ENCODE measurements at regions of chr2 and their contacts with region 1.

Region 1: GRCh38 chr2:38685116-38685735 is 19.3 kb downstream of the GALM start:
- DNase-seq: no peak
- H3K4me3 ChIP-seq: no peak overlapping the region
- H3K4me3 Mint-ChIP-seq: peak overlapping the region in 3 of 8 donors; percentile 24 to 62 (median 53)
- H3K27ac ChIP-seq: no peak overlapping the region
- H3K27ac Mint-ChIP-seq: peak overlapping the region in 6 of 7 donors; percentile 10 to 98 (median 83)
- H3K4me1 ChIP-seq: peaks cover 61% of the 10 kb centered on the region
- H3K4me1 Mint-ChIP-seq: peaks cover 38 to 76% (median 54%) of the 10 kb centered on the region in 4 donors
- H3K27me3 ChIP-seq: no peaks in the 10 kb centered on the region
- H3K27me3 Mint-ChIP-seq: no peaks in the 10 kb centered on the region

Region 2: DNA sequence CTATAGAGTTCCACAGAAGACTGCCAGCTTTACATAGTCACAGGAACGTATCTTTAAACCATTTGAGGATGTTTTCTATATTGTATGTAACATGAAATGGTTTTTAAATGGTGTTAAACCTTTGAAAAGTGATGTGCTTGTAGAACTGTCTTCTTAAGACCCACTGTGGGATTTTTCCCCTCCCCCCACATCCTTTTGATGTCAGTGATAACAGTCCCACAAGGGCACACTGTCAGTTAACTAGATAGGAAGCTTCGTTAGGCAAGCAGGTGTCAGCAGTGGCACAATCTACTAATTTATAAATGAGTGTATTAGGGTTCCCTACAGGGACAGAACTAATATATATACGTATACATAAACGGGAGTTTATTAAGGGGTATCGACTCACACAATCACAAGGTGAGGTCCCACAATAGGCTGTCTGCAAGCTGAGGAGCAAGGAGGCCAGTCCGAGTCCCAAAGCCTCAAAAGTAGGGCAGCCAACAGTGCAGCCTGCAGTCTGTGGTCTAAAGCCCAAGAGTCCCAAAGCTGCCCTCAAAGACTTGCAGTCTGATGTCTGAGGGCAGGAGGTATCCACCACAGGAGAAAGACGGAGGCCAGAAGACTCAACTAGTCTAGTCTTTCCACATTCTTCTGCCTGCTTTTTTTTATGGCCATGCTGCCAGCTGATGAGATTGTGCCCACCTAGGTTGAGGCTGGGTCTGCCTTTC is 58.7 kb before region 1 on chr2:
- CTCF ChIA-PET with region 1: interaction called, 14 read pairs
- POLR2A ChIA-PET with region 1: interaction called, 13 read pairs
- intact Hi-C with region 1: no loop called
- DNase-seq: peak; percentile 56 to 71 (median 64)
- H3K4me3 ChIP-seq: no peak overlapping the region
- H3K4me3 Mint-ChIP-seq: peak overlapping the region in 7 of 8 donors; percentile 22 to 70 (median 57)
- H3K27ac ChIP-seq: peak overlapping the region; percentile 7
- H3K27ac Mint-ChIP-seq: peak overlapping the region; percentile 43 to 89 (median 82)
- H3K4me1 ChIP-seq: peaks cover 21% of the 10 kb centered on the region
- H3K4me1 Mint-ChIP-seq: peaks cover 20 to 29% (median 26%) of the 10 kb centered on the region in 4 donors
- H3K27me3 ChIP-seq: no peaks in the 10 kb centered on the region
- H3K27me3 Mint-ChIP-seq: no peaks in the 10 kb centered on the region

Region 3: GRCh38 chr2:38653715-38654527 is 31.3 kb before region 1 on chr2:
- CTCF ChIA-PET with region 1: interaction called, 11 read pairs
- POLR2A ChIA-PET with region 1: interaction called, 21 read pairs
- intact Hi-C with region 1: no loop called
- DNase-seq: peak; percentile 66 to 82 (median 70)
- H3K4me3 ChIP-seq: peak overlapping the region in 1 of 2 donors; percentile 18
- H3K4me3 Mint-ChIP-seq: peak overlapping the region in 7 of 8 donors; percentile 61 to 87 (median 80)
- H3K27ac ChIP-seq: peak overlapping the region; percentile 51
- H3K27ac Mint-ChIP-seq: peak overlapping the region; percentile 87 to 97 (median 97)
- H3K4me1 ChIP-seq: peaks cover 56% of the 10 kb centered on the region
- H3K4me1 Mint-ChIP-seq: peaks cover 32 to 71% (median 50%) of the 10 kb centered on the region in 4 donors
- H3K27me3 ChIP-seq: no peaks in the 10 kb centered on the region
- H3K27me3 Mint-ChIP-seq: no peaks in the 10 kb centered on the region

Region 4: DNA sequence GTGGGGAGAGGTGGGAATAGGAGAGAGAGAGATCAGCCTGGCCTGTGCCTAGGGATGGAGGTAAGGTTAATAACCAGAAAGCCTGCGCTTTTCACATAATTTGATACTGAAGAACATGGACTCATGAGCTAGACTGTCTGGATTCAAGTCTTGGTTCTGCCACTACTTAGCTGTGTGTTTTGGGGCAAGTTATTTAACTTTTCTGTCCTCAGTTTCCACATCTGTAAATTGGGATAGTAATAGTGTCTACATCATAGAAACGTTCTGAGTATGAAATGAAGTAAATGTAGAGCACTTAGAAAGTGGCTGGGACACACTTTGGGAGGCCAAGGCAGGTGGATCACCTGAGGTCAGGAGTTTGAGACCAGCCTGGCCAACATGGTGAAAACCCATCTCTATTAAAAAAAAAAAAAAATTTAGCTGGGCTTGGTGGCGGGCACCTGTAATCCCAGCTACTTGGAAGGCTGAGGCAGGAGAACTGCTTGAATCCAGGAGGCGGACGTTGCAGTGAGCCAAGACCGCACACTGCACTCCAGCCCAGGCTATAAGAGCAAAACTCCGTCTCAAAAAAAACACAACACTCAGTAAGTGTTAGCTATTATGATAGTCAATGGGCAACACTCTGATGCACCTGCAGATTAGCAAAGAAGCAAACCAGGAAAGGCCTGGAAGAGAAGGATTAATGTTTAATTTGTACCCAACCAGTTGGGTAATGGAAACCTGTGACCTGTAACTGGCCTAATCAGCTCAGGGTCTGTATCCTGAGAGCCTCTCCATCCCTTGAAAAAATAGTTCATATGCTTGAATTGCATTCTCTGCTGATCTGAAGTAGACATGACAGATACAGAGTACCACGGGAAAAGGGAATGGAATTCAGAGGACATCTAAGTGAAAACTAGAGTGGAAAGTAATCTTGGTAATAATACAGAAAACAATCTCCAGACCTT is 12.5 kb before region 1 on chr2:
- CTCF ChIA-PET with region 1: interaction called, 34 read pairs
- POLR2A ChIA-PET with region 1: interaction called, 87 read pairs
- intact Hi-C with region 1: loop called (anchors 2 kb)
- DNase-seq: no peak
- H3K4me3 ChIP-seq: no peak overlapping the region
- H3K4me3 Mint-ChIP-seq: peak overlapping the region in 6 of 8 donors; percentile 4 to 73 (median 28)
- H3K27ac ChIP-seq: no peak overlapping the region
- H3K27ac Mint-ChIP-seq: peak overlapping the region; percentile 57 to 93 (median 87)
- H3K4me1 ChIP-seq: peaks cover 87% of the 10 kb centered on the region
- H3K4me1 Mint-ChIP-seq: peaks cover 47 to 86% (median 67%) of the 10 kb centered on the region in 4 donors
- H3K27me3 ChIP-seq: no peaks in the 10 kb centered on the region
- H3K27me3 Mint-ChIP-seq: no peaks in the 10 kb centered on the region

Region 5: GRCh38 chr2:38702413-38702812 is 17.2 kb after region 1 on chr2:
- CTCF ChIA-PET with region 1: interaction called, 96 read pairs
- POLR2A ChIA-PET with region 1: interaction called, 50 read pairs
- intact Hi-C with region 1: loop called (anchors 2 kb)
- DNase-seq: no peak
- H3K4me3 ChIP-seq: no peak overlapping the region
- H3K4me3 Mint-ChIP-seq: peak overlapping the region in 6 of 8 donors; percentile 51 to 71 (median 64)
- H3K27ac ChIP-seq: peak overlapping the region; percentile 41
- H3K27ac Mint-ChIP-seq: peak overlapping the region; percentile 84 to 97 (median 94)
- H3K4me1 ChIP-seq: peaks cover 88% of the 10 kb centered on the region
- H3K4me1 Mint-ChIP-seq: peaks cover 45 to 77% (median 62%) of the 10 kb centered on the region in 4 donors
- H3K27me3 ChIP-seq: no peaks in the 10 kb centered on the region
- H3K27me3 Mint-ChIP-seq: no peaks in the 10 kb centered on the region

Region 6: GRCh38 chr2:38720613-38721241 is 35.5 kb after region 1 on chr2:
- CTCF ChIA-PET with region 1: interaction called, 125 read pairs
- POLR2A ChIA-PET with region 1: interaction called, 49 read pairs
- intact Hi-C with region 1: loop called (anchors 1 kb)
- DNase-seq: no peak
- H3K4me3 ChIP-seq: no peak overlapping the region
- H3K4me3 Mint-ChIP-seq: peak overlapping the region in 5 of 8 donors; percentile 22 to 44 (median 29)
- H3K27ac ChIP-seq: no peak overlapping the region
- H3K27ac Mint-ChIP-seq: peak overlapping the region; percentile 75 to 94 (median 89)
- H3K4me1 ChIP-seq: peaks cover 58% of the 10 kb centered on the region
- H3K4me1 Mint-ChIP-seq: peaks cover 39 to 68% (median 54%) of the 10 kb centered on the region in 4 donors
- H3K27me3 ChIP-seq: no peaks in the 10 kb centered on the region
- H3K27me3 Mint-ChIP-seq: no peaks in the 10 kb centered on the region

Measured in CD4-positive, alpha-beta memory T cell (primary cell).